Lower leg skin (tissue), 4 donors: ENCODE measurements at regions of chr9 and their contacts with region 1.

Region 1: DNA sequence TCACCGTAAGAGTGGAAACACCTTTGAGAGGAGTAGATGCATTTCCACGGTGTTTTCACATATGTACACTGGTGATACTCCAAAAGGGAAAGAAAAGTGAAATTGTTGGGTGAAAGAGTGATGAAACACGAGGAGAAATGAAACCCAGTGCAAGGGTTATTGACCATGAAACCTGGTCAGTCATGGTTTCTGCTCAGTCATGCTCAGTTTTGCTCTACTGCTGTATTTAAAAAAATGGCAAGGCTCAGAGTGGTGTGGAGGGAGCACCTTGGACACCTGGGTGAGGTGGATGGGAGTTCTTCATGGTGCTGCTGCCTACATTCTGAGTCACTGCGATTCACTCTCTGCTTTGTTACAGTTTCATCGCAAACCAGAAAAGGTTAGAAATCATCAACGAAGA is 32.3 kb downstream of the NTRK2 start:
- DNase-seq: no peak
- H3K4me3 ChIP-seq: no peak overlapping the region
- CTCF ChIP-seq: no peak
- POLR2A ChIP-seq: no peak

Region 2: DNA sequence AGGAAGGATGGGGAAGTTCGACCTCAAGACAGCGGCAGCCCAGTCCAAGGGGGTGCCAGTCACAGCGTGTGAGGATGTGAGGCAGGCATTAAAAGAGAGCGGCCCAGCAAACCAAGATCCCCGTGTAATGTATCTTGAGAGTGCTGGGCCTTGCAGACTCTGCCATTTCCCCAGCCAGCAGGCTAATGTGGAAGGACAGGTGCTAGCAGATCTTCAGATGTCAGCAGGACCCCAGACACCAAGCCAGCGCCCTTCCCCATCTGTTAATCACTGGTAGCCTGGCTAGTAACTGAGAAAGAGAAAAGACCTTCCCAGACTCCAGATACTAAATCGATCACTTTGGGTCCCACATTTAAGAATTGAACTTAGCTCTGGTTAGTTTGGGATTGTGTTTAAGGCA is 29.9 kb after region 1 on chr9:
- intact Hi-C with region 1: no loop called
- DNase-seq: no peak
- H3K4me3 ChIP-seq: no peak overlapping the region
- CTCF ChIP-seq: no peak
- POLR2A ChIP-seq: no peak

Region 3: GRCh38 chr9:84839541-84839940 is 137.7 kb after region 1 on chr9:
- intact Hi-C with region 1: no loop called
- DNase-seq: no peak
- H3K4me3 ChIP-seq: no peak overlapping the region
- CTCF ChIP-seq: no peak
- POLR2A ChIP-seq: no peak

Region 4: GRCh38 chr9:84953797-84954705 is 252.2 kb after region 1 on chr9:
- intact Hi-C with region 1: loop called (anchors 10 kb)
- DNase-seq: peak; percentile 81 to 97
- H3K4me3 ChIP-seq: no peak overlapping the region
- CTCF ChIP-seq: peak in 1 of 3 donors; percentile 92
- POLR2A ChIP-seq: no peak